ENCODE measurements at regions of chr19 and their contacts with region 1.

Region 1: GRCh38 chr19:7197119-7197759 is 97.0 kb downstream of the INSR start:
- DNase-seq: peak; percentile 80
- H3K4me3 ChIP-seq: peak overlapping the region; percentile 57
- CTCF ChIP-seq: no peak

Region 2: DNA sequence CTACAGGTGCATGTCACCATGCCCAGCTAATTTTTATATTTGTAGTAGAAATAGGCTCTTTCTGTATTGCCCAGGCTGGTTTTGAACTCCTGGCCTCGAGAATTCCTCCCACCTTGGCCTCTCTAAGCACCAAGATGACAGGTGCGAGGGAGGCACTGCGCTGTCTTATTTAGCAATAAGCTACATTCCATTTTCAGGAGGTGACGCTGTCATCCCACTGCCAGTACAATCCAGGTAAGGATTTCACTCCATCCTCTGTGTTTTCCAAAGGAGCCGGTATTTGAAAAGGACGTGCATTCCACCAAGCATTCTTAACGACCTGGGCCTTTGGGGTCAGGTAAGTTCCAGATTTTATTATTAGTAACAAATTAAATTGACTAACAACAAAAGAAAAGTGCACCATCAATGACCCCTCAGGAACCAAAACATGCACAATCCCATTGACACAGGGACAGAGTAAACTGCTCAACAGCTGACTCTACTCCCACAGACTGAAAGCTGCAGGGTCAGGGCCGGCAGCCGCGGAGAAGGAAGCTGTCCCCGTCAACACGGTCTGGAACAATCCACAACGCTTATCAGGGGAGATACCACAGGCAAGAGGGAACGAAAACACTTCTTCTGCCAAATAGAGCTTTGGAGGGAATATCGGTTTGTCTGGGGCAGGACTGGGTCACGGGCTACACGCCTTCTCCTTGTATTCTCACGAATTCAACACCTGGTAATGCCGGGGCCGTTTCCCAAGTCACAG is 14.1 kb after region 1 on chr19:
- CTCF ChIA-PET with region 1: no interaction called
- POLR2A ChIA-PET with region 1: no interaction called
- DNase-seq: no peak
- H3K4me3 ChIP-seq: no peak overlapping the region
- CTCF ChIP-seq: no peak

Region 3: GRCh38 chr19:7293795-7294570 is 96.7 kb after region 1 on chr19 and contains the start of gene INSR:
- CTCF ChIA-PET with region 1: no interaction called
- POLR2A ChIA-PET with region 1: interaction called, 10 read pairs
- DNase-seq: peak; percentile 26
- H3K4me3 ChIP-seq: peak within 1 kb of the TSS; percentile 66
- CTCF ChIP-seq: no peak

Measured in AG04449 (cell line).